Ascending aorta (tissue), 2 donors: ENCODE measurements at regions of chr6 and their contacts with region 1.

Region 1: DNA sequence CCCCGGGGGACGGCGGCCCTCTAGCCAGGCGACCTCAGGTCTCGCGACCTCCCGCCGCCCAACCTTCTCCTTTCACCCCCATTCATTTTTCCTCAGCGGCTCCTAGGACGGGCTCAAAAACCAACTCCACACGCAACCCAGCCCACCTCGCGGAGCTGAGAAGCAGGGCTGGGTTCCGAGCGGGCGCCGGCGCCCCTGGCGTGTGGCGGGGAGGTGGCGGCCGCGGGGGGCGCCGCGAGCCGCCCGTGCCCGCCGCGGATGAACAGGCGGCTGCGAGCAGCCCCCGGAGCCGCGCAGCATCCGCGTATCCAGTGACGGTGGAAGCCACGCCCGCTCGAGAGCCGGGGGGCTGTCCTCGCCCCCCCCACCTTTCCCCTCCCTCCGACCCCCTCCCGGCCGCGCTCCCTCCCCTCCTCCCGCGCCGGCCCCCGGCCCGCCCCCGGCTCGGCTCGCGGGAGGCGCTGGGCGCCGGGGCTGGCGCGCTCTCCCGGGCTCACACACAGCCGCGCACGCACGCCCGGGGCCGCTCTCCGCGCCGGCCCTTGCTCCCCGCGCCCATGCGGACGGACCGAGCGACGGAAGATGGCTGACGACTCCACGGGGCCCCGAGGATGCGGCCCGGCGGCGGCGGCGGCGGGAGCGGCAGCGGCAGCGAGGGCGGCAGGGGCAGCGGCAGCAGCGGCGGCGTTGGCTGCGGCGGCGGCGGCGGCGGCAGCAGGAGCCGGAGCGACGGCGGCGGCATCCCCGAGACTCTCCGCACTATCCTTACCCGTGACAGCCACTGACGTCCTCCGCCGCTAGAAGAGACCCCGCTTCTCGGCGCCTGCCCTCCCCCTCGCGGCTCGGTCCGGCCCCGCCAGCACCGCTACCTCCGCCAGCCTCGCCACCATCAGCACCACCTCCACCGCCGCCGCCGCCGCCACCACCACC is at the start of gene SOBP:
- DNase-seq: peak in 1 of 2 donors; percentile 77
- H3K4me3 ChIP-seq: peak within 1 kb of the TSS; percentile 73 to 79
- H3K27ac ChIP-seq: peak within 1 kb of the TSS; percentile 82 to 86
- H3K4me1 ChIP-seq: peaks cover 6 to 27% of the 10 kb centered on the region in 2 donors
- H3K27me3 ChIP-seq: no peaks in the 10 kb centered on the region
- CTCF ChIP-seq: peak in 1 of 3 experiments; percentile 26
- total RNA-seq, gene SOBP: 5.4 TPM

Region 2: DNA sequence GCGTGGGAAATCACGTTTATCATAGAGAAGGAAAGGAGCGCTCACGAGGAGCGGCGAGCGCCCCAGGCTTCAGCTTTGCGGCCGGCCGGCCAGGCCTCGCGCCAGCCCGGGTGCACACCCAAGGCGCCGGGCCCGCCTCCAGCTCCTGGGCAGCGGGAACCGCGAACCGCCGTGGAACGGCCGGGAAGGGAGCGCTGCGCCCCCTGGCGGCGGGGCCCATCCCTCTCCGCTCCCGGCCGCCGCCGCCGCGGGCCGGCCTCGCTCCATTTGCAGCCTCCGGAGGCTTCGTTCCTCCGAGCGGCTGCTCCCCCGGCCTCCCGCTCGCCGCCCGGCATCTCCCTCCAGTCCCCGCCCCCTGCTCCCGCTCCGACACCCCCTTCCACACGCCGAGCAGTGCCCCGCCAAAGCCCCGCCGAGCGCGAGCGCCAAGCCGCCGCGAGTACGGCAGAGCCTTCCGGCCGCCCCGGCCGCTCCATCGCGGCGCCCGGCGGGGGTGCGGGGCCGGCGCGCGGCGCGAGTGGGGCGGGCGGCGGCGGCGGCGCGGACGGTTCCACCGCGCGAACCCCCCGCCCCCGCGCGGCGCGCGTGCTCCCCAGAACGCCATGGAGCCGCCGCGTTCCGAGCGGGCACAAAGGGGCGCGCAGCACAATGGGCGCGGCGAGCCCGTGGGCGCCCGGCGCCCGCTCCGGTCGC is 375.5 kb before region 1 on chr6:
- intact Hi-C with region 1: loop called (anchors 10 kb)
- DNase-seq: peak in 1 of 2 donors; percentile 89
- H3K4me3 ChIP-seq: peak overlapping the region; percentile 90 to 97
- H3K27ac ChIP-seq: peak overlapping the region; percentile 34 to 85
- H3K4me1 ChIP-seq: peaks cover 9 to 11% of the 10 kb centered on the region in 2 donors
- H3K27me3 ChIP-seq: no peaks in the 10 kb centered on the region
- CTCF ChIP-seq: peak; percentile 45 to 85 (median 73)

Region 3: DNA sequence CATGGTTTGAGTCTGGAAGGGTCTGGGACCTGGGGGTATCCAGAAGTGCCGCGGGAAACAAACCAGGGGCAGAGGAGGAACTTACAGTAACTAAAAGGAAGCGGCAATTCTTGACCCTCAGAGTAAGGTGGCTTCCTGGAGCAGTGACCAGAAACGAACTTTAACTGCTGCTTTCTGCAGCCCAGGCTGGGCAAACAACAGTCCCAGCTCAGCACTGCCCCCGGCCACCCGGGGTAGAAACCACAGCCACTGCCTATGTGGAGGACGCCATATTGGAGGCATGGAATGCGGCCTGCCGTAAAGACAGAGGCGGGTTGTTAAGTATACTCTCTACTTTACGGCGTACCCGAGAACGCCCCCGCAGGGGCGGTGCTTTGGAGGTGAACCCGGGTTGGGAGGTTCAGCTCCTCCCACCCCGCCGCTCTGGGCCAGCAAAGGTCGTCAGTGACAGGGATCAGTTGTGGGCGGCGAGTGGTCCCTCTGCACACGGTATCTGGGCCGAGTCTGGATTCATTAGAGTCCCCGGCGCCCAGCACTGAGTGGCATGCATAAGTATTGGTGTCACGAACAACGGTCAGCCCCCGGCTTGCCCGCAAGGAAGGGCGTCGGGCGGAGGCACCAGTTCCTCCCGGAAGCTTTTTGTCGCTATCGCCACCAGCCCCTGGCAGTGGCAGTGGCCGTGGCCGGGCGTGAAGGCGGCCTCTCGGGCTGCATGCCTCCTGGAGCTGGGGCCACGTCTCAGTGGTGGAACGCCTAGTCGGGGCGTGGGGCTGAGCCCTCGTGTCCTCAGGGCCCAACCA is 30.4 kb before region 1 on chr6 and contains the start of gene PDSS2:
- intact Hi-C with region 1: loop called (anchors 1 kb)
- DNase-seq: peak; percentile 98 to 99
- H3K4me3 ChIP-seq: peak within 1 kb of the TSS; percentile 82 to 92
- H3K27ac ChIP-seq: peak within 1 kb of the TSS; percentile 80 to 91
- H3K4me1 ChIP-seq: peaks cover 3 to 5% of the 10 kb centered on the region in 2 donors
- H3K27me3 ChIP-seq: no peaks in the 10 kb centered on the region
- CTCF ChIP-seq: peak in 2 of 3 experiments; percentile 39 to 53
- total RNA-seq, gene PDSS2: 0.85 TPM

Region 4: DNA sequence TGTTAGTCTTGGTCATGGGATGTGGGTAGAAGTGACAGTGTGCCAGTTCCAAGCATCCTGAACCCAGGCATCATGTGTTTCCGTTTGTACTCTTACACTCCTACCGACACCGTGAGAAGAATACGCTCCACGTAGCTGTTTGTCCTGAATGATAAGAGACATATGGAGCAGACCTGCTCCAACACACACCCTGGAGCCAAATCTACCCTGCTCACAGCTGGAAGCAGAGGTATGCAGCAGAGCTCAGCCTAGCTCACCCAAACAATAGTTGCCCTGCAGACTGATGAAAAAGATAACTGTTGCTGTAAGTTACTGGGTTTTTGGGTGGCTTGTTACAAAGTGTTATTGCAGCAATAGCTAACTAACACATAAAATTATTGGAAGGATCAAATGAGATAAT is 16.2 kb before region 1 on chr6:
- intact Hi-C with region 1: no loop called
- DNase-seq: no peak
- H3K4me3 ChIP-seq: no peak overlapping the region
- H3K27ac ChIP-seq: no peak overlapping the region
- H3K4me1 ChIP-seq: no peaks in the 10 kb centered on the region
- H3K27me3 ChIP-seq: no peaks in the 10 kb centered on the region
- CTCF ChIP-seq: no peak

Region 5: DNA sequence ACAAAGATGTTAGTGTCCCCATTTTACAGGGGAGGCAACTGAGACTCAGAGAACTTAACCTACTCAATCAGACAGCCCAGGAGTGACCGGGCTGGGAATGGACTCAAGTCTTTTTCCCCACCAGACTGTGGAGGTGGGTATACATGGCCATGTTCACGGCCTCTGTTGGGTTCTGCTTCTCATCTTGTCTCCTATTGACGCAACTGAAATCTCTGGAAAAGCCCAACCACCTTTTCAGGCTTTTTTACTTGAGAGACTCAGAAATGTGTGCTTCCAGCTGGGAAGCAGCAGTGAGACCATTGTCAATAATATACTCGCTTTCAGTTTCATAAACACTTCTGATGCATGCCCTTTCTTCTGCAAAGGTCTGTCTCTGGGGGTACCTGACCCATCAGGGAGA is 70.8 kb after region 1 on chr6:
- intact Hi-C with region 1: loop called (anchors 2 kb)
- DNase-seq: no peak
- H3K4me3 ChIP-seq: peak overlapping the region in 1 of 2 donors; percentile 12
- H3K27ac ChIP-seq: peak overlapping the region; percentile 73 to 75
- H3K4me1 ChIP-seq: peaks cover 0 to 17% of the 10 kb centered on the region in 2 donors
- H3K27me3 ChIP-seq: no peaks in the 10 kb centered on the region
- CTCF ChIP-seq: no peak

Region 6: DNA sequence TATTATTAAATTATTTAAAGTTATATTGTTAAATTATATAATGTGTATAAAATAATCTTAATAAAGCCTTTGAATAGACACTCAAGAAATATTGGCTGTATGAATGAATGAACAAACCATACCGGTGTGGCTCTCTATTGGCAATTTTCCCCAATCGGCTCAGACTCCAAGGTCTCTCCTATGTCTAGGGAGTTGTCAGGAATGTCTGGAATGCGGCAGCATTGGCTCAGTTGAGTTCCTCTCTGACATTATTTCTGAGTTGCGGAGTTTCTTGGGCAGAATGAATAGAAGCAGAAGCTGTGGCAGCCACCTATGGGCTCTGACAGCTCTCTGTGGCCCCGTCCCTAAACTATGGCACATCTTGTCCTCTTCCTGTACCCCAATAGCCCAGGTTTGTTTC is 111.0 kb after region 1 on chr6:
- intact Hi-C with region 1: loop called (anchors 10 kb)
- DNase-seq: no peak
- H3K4me3 ChIP-seq: no peak overlapping the region
- H3K27ac ChIP-seq: no peak overlapping the region
- H3K4me1 ChIP-seq: peaks cover 0 to 7% of the 10 kb centered on the region in 2 donors
- H3K27me3 ChIP-seq: no peaks in the 10 kb centered on the region
- CTCF ChIP-seq: no peak